AG04450 (cell line): ENCODE measurements at regions of chr1 and their contacts with region 1.

Region 1: GRCh38 chr1:179706339-179706941 is 36.7 kb upstream of the FAM163A start:
- DNase-seq: peak; percentile 38
- H3K4me3 ChIP-seq: no peak overlapping the region
- H3K27ac ChIP-seq: no peak overlapping the region
- H3K27me3 ChIP-seq: peaks cover 2% of the 10 kb centered on the region
- CTCF ChIP-seq: peak; percentile 80

Region 2: DNA sequence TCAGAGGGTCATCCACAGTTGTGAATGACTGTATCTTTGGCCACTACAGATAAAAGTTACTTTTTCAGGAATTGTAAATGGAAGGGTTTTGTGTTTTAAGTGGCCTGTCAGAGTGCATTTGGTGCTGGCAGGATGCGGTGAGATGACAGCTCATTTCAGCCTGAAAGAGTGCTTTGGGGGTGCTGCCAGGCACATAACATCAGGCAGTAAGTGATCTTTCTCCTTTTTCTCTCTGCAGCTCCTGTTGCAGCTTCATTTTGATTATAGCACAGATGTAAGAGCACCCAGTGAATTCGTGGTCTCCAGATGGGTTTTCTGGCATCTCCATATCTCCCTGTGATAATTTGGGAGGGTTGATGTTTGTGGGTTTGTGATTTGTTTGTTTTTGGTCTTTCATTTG is 21.8 kb after region 1 on chr1:
- CTCF ChIA-PET with region 1: interaction called, 20 read pairs
- POLR2A ChIA-PET with region 1: no interaction called
- DNase-seq: no peak
- H3K4me3 ChIP-seq: no peak overlapping the region
- H3K27ac ChIP-seq: no peak overlapping the region
- H3K27me3 ChIP-seq: peaks cover 3% of the 10 kb centered on the region
- CTCF ChIP-seq: no peak

Region 3: DNA sequence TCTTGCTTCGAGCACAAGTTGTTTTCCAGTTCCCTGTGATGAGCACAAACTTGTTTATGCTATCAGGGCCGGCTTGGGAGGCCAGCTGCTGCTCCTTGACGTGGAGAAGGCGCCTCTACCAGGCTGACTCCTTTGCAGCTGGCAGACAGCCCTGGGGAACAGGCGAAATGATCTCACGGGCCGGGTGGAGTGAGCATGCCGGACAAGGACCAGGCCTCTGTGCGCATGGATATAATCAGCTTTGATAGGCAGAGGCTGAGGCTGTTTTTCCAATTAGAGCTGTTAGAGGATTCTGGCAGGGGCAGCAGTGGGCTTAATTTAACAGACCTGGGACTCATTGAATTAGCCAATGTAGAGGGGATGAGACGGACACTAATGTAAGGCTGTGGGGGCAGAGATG is 75.5 kb after region 1 on chr1:
- CTCF ChIA-PET with region 1: interaction called, 12 read pairs
- POLR2A ChIA-PET with region 1: no interaction called
- DNase-seq: peak; percentile 4
- H3K4me3 ChIP-seq: no peak overlapping the region
- H3K27ac ChIP-seq: no peak overlapping the region
- H3K27me3 ChIP-seq: peaks cover 24% of the 10 kb centered on the region
- CTCF ChIP-seq: no peak

Region 4: DNA sequence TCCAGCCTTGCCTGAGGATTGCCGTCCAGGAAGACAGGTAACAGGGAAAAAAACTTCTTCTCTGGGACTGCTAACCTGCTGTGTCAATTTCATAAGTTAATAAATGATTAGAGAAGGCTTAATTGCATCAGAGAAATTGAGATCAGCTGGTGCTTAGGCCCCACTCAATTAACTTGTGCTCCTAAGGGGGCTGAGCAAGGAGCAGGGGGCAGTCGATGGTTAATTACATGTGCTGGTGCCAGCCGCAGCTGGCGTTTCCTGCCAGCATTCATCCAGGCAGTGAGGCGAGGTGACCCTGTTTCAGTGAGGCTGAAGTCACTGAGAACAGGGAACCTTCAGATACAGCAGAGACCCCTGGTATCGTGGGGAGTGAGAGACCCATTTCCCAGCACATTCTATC is 96.7 kb after region 1 on chr1:
- CTCF ChIA-PET with region 1: interaction called, 1,155 read pairs
- POLR2A ChIA-PET with region 1: no interaction called
- DNase-seq: no peak
- H3K4me3 ChIP-seq: no peak overlapping the region
- H3K27ac ChIP-seq: no peak overlapping the region
- H3K27me3 ChIP-seq: peaks cover 39% of the 10 kb centered on the region
- CTCF ChIP-seq: no peak

Region 5: DNA sequence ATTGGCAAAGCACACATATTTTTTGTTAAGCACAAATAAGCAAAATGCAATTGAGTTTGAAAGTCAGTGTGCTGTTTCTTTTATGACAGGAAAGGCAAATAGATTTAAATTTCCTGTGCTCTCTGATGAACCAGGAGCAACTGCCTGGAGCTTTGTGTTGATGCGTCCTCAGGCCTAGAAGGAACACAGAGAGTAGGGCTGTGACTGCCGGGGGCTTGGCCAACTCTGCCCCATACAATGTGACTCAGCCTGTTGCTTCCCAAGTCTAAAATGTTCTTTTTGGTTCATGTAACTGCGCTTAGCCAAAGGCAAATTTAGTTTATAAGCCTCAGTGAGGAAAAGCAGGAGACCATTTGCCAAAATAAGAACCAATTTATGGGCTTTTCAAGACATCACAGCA is 133.7 kb after region 1 on chr1:
- CTCF ChIA-PET with region 1: interaction called, 33 read pairs
- POLR2A ChIA-PET with region 1: no interaction called
- DNase-seq: no peak
- H3K4me3 ChIP-seq: no peak overlapping the region
- H3K27ac ChIP-seq: no peak overlapping the region
- H3K27me3 ChIP-seq: no peaks in the 10 kb centered on the region
- CTCF ChIP-seq: no peak

Region 6: DNA sequence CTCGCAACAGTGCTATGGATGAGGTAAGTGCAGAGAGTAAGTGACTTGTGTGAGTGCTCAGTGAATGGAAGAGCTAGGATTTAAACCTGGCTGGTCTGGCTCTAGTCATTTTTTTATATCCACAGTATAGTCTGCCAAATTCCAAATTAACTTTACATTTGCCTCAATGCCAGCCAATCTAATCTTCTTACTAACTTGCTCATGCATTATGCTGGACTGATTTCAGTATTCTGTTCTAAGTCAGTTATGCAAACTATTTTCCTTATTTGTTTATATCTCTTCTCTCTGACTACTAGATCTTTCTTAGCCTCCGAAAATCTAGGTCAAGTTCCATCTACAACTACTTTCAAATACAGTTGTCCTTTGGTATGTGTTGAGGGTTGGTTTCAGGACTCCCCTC is 1058.7 kb after region 1 on chr1:
- CTCF ChIA-PET with region 1: no interaction called
- POLR2A ChIA-PET with region 1: no interaction called
- DNase-seq: peak; percentile 38
- H3K4me3 ChIP-seq: no peak overlapping the region
- H3K27ac ChIP-seq: no peak overlapping the region
- H3K27me3 ChIP-seq: no peaks in the 10 kb centered on the region
- CTCF ChIP-seq: no peak